Panc1 (cell line): ENCODE measurements at regions of chr4 and their contacts with region 1.

Region 1: DNA sequence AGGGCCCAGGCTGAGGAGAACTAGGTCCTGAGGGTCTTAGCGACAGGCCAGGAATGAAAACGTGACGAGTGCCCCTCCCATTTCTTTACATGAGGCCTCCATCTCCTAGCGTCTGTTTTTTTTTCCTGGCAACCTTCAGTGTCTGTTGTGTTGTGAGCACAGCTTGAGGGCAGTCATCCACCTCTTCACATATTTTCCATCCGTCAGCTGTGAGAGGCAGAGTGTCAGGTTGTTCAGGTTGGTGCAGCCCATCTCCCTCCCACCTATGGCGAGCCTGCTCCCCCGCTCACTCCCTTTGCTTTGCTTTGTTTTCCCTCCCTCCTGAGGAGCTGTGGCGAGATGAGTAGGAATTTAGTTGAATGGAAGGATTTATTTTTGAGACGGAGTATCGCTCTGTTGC is 51.7 kb upstream of the CHRNA9 start:
- DNase-seq: no peak
- ATAC-seq: no peak
- H3K4me3 ChIP-seq: no peak overlapping the region
- H3K27ac ChIP-seq: no peak overlapping the region
- H3K4me1 ChIP-seq: no peaks in the 10 kb centered on the region
- H3K27me3 ChIP-seq: no peaks in the 10 kb centered on the region
- CTCF ChIP-seq: no peak

Region 2: GRCh38 chr4:40173470-40173875 is 109.9 kb before region 1 on chr4:
- CTCF ChIA-PET with region 1: no interaction called
- POLR2A ChIA-PET with region 1: no interaction called
- in situ Hi-C with region 1: no loop called
- intact Hi-C with region 1: no loop called
- DNase-seq: no peak
- ATAC-seq: no peak
- H3K4me3 ChIP-seq: no peak overlapping the region
- H3K27ac ChIP-seq: no peak overlapping the region; the same call in 1 of the 2 replicates
- H3K4me1 ChIP-seq: peaks cover 14% of the 10 kb centered on the region
- H3K27me3 ChIP-seq: no peaks in the 10 kb centered on the region
- CTCF ChIP-seq: no peak

Region 3: DNA sequence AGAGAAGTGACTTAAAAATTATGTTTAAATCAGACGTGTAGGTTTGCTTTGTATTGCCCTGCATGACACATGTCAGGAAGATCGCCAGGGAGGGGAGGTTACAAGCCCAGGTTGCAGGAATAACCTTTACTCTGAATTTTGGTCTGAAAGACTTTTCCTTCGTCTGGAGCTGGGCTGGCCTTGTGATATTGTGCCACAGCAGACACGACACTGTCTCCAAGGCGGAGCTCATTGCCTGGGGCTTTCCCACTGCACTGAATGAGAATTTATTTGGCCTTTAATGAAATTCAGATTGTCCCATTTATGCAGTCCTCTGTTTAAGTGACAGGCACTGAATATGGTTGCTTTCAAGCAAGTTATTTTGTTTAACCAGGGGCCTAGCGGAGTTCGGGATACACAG is 41.5 kb before region 1 on chr4:
- CTCF ChIA-PET with region 1: no interaction called
- POLR2A ChIA-PET with region 1: interaction called, 21 read pairs
- in situ Hi-C with region 1: no loop called
- intact Hi-C with region 1: no loop called
- DNase-seq: no peak
- ATAC-seq: no peak
- H3K4me3 ChIP-seq: no peak overlapping the region
- H3K27ac ChIP-seq: peak overlapping the region; percentile 57; the same call in 1 of the 2 replicates
- H3K4me1 ChIP-seq: no peaks in the 10 kb centered on the region; the same call in 1 of the 2 replicates
- H3K27me3 ChIP-seq: no peaks in the 10 kb centered on the region
- CTCF ChIP-seq: no peak

Region 4: GRCh38 chr4:40265910-40266274 is 17.5 kb before region 1 on chr4:
- CTCF ChIA-PET with region 1: no interaction called
- POLR2A ChIA-PET with region 1: interaction called, 11 read pairs
- in situ Hi-C with region 1: no loop called
- intact Hi-C with region 1: no loop called
- DNase-seq: no peak
- ATAC-seq: no peak
- H3K4me3 ChIP-seq: no peak overlapping the region
- H3K27ac ChIP-seq: no peak overlapping the region; the same call in 1 of the 2 replicates
- H3K4me1 ChIP-seq: no peaks in the 10 kb centered on the region
- H3K27me3 ChIP-seq: no peaks in the 10 kb centered on the region
- CTCF ChIP-seq: no peak